ENCODE measurements at regions of chrX and their contacts with region 1.

Region 1: DNA sequence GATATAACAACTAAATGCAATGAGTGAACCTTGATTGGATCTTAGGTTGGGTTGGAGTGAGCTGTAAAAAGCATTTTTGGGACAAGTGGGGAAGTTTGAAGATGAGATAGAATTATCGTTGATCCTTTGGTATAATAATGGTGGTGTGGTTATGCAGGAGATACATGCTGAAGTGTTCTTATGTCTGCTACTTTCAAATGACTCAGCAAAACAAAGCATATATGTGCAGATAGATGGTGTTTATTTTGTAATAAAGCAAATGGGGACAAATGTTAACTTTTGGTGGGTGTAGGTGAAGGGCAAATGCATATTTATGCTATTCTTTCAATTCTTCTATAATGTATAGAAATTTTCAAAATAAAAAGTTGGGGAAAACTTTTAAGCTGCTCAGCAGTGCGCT is 26.2 kb downstream of the RP2 start:
- DNase-seq: no peak
- H3K4me3 ChIP-seq: no peak overlapping the region
- H3K27ac ChIP-seq: no peak overlapping the region
- H3K4me1 ChIP-seq: no peaks in the 10 kb centered on the region
- H3K27me3 ChIP-seq: no peaks in the 10 kb centered on the region
- CTCF ChIP-seq: no peak
- EP300 ChIP-seq: no peak
- POLR2A ChIP-seq: no peak

Region 2: DNA sequence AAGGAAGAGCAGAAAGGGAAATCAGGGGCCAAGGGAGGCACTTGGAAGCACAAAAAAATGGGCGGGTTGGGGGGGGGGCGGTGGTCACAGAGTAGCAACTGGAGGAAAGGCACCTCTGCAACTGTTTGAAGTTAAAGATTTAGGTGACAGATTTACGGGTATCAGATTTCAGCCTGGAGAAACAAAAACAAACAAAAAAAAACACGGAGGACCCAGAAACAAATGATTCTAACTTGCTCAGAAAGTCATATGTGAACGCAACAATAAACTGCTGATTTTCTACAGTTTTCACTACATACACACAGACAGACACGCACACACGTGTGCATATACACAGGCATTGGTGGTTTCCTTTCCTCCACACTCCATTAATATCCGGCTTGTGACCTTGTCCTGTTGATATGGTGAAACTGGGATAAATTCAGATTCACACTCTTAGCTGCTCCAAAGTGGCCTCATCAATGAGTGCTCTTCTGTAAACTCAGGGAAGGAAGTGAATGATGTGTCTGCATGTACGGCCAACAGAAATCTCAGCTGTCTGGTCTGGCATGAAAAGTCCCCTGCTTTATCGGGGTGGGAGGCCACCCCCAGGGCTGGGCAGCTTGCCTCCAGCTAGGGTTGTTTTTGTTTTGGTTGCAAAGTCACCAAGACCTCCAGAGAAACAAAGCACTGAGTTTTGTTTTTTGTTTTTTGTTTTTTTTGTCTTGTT is 235.2 kb before region 1 on chrX:
- intact Hi-C with region 1: no loop called
- DNase-seq: peak; percentile 20 to 61 (median 56)
- H3K4me3 ChIP-seq: no peak overlapping the region
- H3K27ac ChIP-seq: peak overlapping the region; percentile 8 to 45
- H3K4me1 ChIP-seq: peaks cover 11% of the 10 kb centered on the region
- H3K27me3 ChIP-seq: no peaks in the 10 kb centered on the region
- CTCF ChIP-seq: no peak
- EP300 ChIP-seq: no peak
- POLR2A ChIP-seq: no peak

Region 3: GRCh38 chrX:46819136-46819535 is 43.9 kb before region 1 on chrX:
- intact Hi-C with region 1: loop called in 1 of 4 experiments (anchors 2 kb)
- DNase-seq: no peak
- H3K4me3 ChIP-seq: no peak overlapping the region
- H3K27ac ChIP-seq: no peak overlapping the region
- H3K4me1 ChIP-seq: no peaks in the 10 kb centered on the region
- H3K27me3 ChIP-seq: no peaks in the 10 kb centered on the region
- CTCF ChIP-seq: no peak
- EP300 ChIP-seq: no peak
- POLR2A ChIP-seq: no peak

Region 4: GRCh38 chrX:47078129-47079043 is 215.3 kb after region 1 on chrX and contains the start of gene RGN:
- intact Hi-C with region 1: no loop called
- DNase-seq: peak; percentile 18 to 58 (median 33)
- H3K4me3 ChIP-seq: peak within 1 kb of the TSS; percentile 2
- H3K27ac ChIP-seq: peak within 1 kb of the TSS in 1 of 2 donors; percentile 31
- H3K4me1 ChIP-seq: no peaks in the 10 kb centered on the region
- H3K27me3 ChIP-seq: no peaks in the 10 kb centered on the region
- CTCF ChIP-seq: no peak
- EP300 ChIP-seq: no peak
- POLR2A ChIP-seq: no peak
- total RNA-seq, gene RGN: 6.8 to 47.0 (median 16.5) TPM

Measured in ovary (tissue), 10 donors.